Activated CD8-positive, alpha-beta T cell treated with anti-CD3 and anti-CD28 coated beads for 36 hours (primary cell): ENCODE measurements at regions of chr18 and their contacts with region 1.

Region 1: DNA sequence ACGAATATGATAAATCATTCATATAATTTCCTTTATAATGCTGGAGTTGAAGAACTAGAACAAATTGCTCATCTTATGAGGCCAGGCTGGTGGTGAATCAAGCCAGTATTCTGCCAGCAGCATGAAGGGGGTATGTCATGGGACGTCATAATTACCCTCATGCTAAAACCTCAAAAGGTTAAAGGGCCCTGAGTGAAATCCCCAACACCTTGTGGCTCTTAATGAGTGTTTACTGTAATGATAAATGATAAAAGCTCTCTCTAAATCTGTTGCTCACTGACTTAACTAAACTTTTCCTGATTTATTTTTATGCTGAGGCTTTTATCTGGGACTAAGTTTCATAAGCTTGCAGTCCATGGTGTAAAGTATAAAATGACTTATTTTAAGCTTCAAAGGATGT is 18.3 kb upstream of the NEDD4L start:
- DNase-seq: peak; percentile 24
- ATAC-seq: peak; percentile 49
- H3K4me3 Mint-ChIP-seq: no peak overlapping the region
- H3K27ac Mint-ChIP-seq: no peak overlapping the region
- H3K4me1 Mint-ChIP-seq: no peaks in the 10 kb centered on the region
- H3K27me3 Mint-ChIP-seq: no peaks in the 10 kb centered on the region
- CTCF ChIP-seq: no peak

Region 2: GRCh38 chr18:57803103-57803969 is 222.4 kb before region 1 on chr18 and contains the start of gene ATP8B1:
- CTCF ChIA-PET with region 1: no interaction called
- POLR2A ChIA-PET with region 1: no interaction called
- intact Hi-C with region 1: loop called (anchors 5 kb)
- DNase-seq: peak; percentile 24
- ATAC-seq: peak; percentile 69
- H3K4me3 Mint-ChIP-seq: peak within 1 kb of the TSS; percentile 75
- H3K27ac Mint-ChIP-seq: no peak within 1 kb of the TSS
- H3K4me1 Mint-ChIP-seq: peaks cover 13% of the 10 kb centered on the region
- H3K27me3 Mint-ChIP-seq: peaks cover 47% of the 10 kb centered on the region
- CTCF ChIP-seq: no peak
- total RNA-seq, gene ATP8B1: 0.18 to 0.38 TPM

Region 3: DNA sequence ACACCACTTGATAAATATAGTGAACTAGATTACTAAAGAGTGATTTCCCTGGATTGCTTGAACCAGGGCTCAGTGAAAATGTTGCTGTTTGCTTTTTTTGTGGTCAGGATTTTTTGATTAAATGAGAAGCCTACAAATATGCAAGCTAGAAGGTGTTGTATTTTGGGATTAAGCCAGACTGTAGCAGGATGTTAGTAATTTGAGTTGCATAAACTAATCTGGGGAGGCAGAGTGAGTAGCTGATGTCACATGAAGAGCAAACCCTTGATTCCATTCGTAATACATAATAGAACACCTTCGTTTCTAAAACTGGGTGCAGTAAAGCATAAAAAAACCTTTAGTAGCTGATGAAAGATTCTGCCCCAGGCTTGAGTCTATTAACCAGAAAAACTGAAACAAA is 50.3 kb after region 1 on chr18:
- CTCF ChIA-PET with region 1: no interaction called
- POLR2A ChIA-PET with region 1: no interaction called
- intact Hi-C with region 1: no loop called
- DNase-seq: no peak
- ATAC-seq: no peak
- H3K4me3 Mint-ChIP-seq: no peak overlapping the region
- H3K27ac Mint-ChIP-seq: no peak overlapping the region
- H3K4me1 Mint-ChIP-seq: no peaks in the 10 kb centered on the region
- H3K27me3 Mint-ChIP-seq: peaks cover 2% of the 10 kb centered on the region
- CTCF ChIP-seq: no peak